A549 (cell line): ENCODE measurements at regions of chr2 and their contacts with region 1.

Region 1: GRCh38 chr2:70767699-70768589 is at the start of gene ADD2:
- DNase-seq: peak; percentile 76 to 81
- ATAC-seq: peak; percentile 86 to 94
- H3K4me3 ChIP-seq: peak within 1 kb of the TSS; percentile 68
- H3K27ac ChIP-seq: peak within 1 kb of the TSS; percentile 77 to 92
- H3K4me1 ChIP-seq: peaks cover 11% of the 10 kb centered on the region
- CTCF ChIP-seq: peak; percentile 97
- EP300 ChIP-seq: no peak
- POLR2A ChIP-seq: peak; percentile 81
- RAD21 ChIP-seq: peak; percentile 31 to 68; a peak in 4 of 5 replicates
- polyA plus RNA-seq, gene ADD2: 25.5 and 28.4 TPM in 2 replicates

Region 2: DNA sequence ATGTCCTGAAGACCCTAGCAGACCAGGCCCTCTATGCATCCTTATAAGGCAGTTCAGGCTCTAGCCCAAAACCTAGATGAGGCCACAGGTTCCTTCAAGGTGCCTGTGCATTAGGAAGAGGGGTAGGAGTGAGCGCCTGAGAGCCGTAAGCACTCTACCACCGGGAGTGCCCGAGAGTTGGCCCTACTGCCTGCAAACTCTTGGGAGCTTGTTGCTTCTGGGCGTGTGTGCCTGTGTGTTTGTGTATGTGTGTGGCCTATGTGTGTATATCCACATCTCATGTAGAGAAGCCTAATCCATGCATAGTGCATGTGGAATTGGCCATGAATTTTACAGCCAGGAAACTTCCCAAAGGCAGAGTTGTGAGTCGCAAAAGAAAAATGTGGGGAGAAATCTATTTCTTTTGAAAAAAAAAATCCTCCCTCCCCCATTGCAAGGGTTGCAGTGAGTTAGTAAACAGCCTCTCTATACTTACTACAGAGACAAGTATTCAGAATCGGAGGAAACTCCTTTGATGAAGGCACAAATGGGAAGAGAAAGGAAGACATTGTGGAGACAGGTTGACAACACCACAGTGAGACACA is 96.8 kb before region 1 on chr2:
- CTCF ChIA-PET with region 1: interaction called, 18 read pairs
- POLR2A ChIA-PET with region 1: interaction called, 3 read pairs
- DNase-seq: no peak
- ATAC-seq: peak in 1 of 2 experiments; percentile 52; a peak in 3 of 6 replicates
- H3K4me3 ChIP-seq: no peak overlapping the region
- H3K27ac ChIP-seq: no peak overlapping the region
- H3K4me1 ChIP-seq: 0 out of 3 replicates have a peak, but pooled peaks cover 5% of the 10 kb centered on the region
- CTCF ChIP-seq: no peak
- EP300 ChIP-seq: no peak
- POLR2A ChIP-seq: no peak
- RAD21 ChIP-seq: no peak

Region 3: DNA sequence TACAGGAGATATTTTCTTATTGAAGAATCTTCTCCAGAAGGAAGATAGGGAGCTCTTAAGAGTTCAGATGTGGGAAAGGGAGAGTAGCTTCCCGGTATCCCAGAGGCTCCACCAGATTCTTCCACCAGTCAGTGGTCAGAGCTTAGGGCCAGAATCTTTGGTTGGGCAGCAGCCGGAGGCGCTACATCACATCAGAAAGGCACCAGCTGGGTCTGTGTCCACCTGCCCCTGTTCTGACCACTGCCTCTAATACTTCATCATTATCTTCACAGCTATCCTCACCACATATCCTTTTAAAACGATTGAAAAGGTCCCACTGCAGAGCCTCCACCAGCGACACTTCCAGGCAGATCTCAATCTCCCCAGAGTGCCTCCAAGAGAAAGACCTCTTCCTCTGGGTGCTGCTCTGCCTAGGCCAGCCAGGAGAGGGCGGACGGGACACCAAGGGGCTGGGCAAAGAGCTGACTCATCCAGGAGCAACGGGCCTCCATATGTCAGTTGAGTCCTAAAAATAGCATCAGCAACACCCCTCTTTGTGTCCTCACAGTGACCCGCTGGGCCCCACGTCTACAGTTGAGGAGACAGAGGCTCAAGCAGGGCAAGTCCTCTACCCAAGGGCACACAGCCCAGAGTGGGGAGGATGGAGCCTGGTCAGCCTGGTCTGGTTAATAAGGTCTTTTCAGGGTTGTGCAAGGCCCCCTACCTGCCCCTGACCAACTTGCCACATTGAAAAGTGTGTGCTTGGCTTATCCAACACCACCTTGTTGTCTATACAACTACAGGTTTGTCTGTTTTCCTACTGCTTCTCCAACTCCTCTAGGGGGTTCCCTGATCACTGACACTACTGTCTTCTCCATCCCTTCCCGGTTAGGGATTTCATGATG is 81.1 kb before region 1 on chr2:
- CTCF ChIA-PET with region 1: interaction called, 41 read pairs
- POLR2A ChIA-PET with region 1: interaction called, 6 read pairs
- DNase-seq: peak; percentile 86 to 93
- ATAC-seq: peak; percentile 97 to 100
- H3K4me3 ChIP-seq: no peak overlapping the region
- H3K27ac ChIP-seq: peak overlapping the region; percentile 59 to 80; a peak in 5 of 6 replicates
- H3K4me1 ChIP-seq: peaks cover 7% of the 10 kb centered on the region
- CTCF ChIP-seq: peak; percentile 58
- EP300 ChIP-seq: no peak
- POLR2A ChIP-seq: no peak
- RAD21 ChIP-seq: peak; percentile 39 to 51; a peak in 3 of 5 replicates

Region 4: DNA sequence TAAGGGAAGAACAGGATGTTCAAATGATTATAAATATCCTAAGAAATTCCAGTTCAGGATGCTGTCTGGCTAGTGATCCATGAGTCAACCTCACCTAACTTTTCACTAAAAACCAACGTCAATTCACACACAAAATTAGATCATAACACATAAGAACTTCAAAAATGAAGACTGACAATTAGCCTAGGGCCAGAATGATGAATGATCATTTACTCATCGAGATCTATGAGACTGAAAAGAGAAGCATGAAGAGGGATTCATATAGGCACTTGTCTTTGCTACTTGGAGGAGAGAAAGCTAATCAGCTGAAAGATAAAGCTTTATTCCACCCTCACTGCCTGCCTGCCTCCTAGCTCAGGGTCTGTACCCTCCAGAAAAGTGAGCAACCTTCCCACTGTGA is 29.8 kb before region 1 on chr2:
- CTCF ChIA-PET with region 1: interaction called, 11 read pairs
- POLR2A ChIA-PET with region 1: no interaction called
- DNase-seq: no peak
- ATAC-seq: no peak
- H3K4me3 ChIP-seq: no peak overlapping the region
- H3K27ac ChIP-seq: no peak overlapping the region
- H3K4me1 ChIP-seq: no peaks in the 10 kb centered on the region
- CTCF ChIP-seq: no peak
- EP300 ChIP-seq: no peak
- POLR2A ChIP-seq: no peak
- RAD21 ChIP-seq: no peak

Region 5: GRCh38 chr2:70748002-70748784 is 19.8 kb before region 1 on chr2:
- CTCF ChIA-PET with region 1: interaction called, 32 read pairs
- POLR2A ChIA-PET with region 1: no interaction called
- DNase-seq: peak in 1 of 2 experiments; percentile 13
- ATAC-seq: peak; percentile 56 to 58; a peak in 2 of 6 replicates
- H3K4me3 ChIP-seq: no peak overlapping the region
- H3K27ac ChIP-seq: no peak overlapping the region
- H3K4me1 ChIP-seq: no peaks in the 10 kb centered on the region
- CTCF ChIP-seq: no peak
- EP300 ChIP-seq: no peak
- POLR2A ChIP-seq: no peak
- RAD21 ChIP-seq: no peak

Region 6: GRCh38 chr2:70779911-70780545 is 12.1 kb after region 1 on chr2:
- CTCF ChIA-PET with region 1: interaction called, 46 read pairs
- POLR2A ChIA-PET with region 1: interaction called, 3 read pairs
- DNase-seq: no peak
- ATAC-seq: peak in 1 of 2 experiments; percentile 44; a peak in 2 of 6 replicates
- H3K4me3 ChIP-seq: no peak overlapping the region
- H3K27ac ChIP-seq: no peak overlapping the region
- H3K4me1 ChIP-seq: peaks cover 23% of the 10 kb centered on the region
- CTCF ChIP-seq: no peak
- EP300 ChIP-seq: no peak
- POLR2A ChIP-seq: no peak
- RAD21 ChIP-seq: no peak

Region 7: GRCh38 chr2:70830366-70830765 is 62.4 kb after region 1 on chr2:
- CTCF ChIA-PET with region 1: no interaction called
- POLR2A ChIA-PET with region 1: no interaction called
- DNase-seq: no peak
- ATAC-seq: no peak; a peak in 1 of 6 replicates
- H3K4me3 ChIP-seq: no peak overlapping the region
- H3K27ac ChIP-seq: no peak overlapping the region
- H3K4me1 ChIP-seq: no peaks in the 10 kb centered on the region
- CTCF ChIP-seq: no peak
- EP300 ChIP-seq: no peak
- POLR2A ChIP-seq: no peak
- RAD21 ChIP-seq: no peak

Region 8: GRCh38 chr2:70855667-70856066 is 87.7 kb after region 1 on chr2:
- CTCF ChIA-PET with region 1: no interaction called
- POLR2A ChIA-PET with region 1: no interaction called
- DNase-seq: no peak
- ATAC-seq: no peak
- H3K4me3 ChIP-seq: no peak overlapping the region
- H3K27ac ChIP-seq: no peak overlapping the region
- H3K4me1 ChIP-seq: no peaks in the 10 kb centered on the region
- CTCF ChIP-seq: no peak
- EP300 ChIP-seq: no peak
- POLR2A ChIP-seq: no peak
- RAD21 ChIP-seq: no peak